Endothelial cell of umbilical vein (primary cell): ENCODE measurements at regions of chr6 and their contacts with region 1.

Region 1: DNA sequence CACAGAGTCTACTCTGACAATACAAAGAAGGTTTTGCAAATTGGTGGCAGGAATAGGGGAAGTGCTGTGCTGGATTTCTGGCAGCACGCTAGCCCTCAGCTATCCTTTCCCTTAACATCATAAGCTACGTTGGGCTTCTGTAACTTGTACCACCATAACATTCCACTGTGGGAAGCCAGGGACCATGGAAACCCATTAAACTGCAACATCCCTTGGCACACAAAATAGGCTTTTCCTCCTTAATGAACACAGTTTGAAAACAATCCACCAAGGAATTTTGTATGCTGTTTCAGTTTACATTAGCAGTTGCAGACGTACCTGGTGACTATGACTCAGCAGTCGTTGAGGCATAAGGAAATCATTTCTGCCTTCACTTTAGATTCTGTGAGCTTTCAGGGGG is 203.9 kb upstream of the RAB32 start:
- DNase-seq: peak; percentile 71
- H3K4me3 ChIP-seq: no peak overlapping the region
- H3K27ac ChIP-seq: no peak overlapping the region
- H3K4me1 ChIP-seq: peaks cover 28% of the 10 kb centered on the region
- H3K27me3 ChIP-seq: no peaks in the 10 kb centered on the region
- CTCF ChIP-seq: no peak
- POLR2A ChIP-seq: no peak

Region 2: DNA sequence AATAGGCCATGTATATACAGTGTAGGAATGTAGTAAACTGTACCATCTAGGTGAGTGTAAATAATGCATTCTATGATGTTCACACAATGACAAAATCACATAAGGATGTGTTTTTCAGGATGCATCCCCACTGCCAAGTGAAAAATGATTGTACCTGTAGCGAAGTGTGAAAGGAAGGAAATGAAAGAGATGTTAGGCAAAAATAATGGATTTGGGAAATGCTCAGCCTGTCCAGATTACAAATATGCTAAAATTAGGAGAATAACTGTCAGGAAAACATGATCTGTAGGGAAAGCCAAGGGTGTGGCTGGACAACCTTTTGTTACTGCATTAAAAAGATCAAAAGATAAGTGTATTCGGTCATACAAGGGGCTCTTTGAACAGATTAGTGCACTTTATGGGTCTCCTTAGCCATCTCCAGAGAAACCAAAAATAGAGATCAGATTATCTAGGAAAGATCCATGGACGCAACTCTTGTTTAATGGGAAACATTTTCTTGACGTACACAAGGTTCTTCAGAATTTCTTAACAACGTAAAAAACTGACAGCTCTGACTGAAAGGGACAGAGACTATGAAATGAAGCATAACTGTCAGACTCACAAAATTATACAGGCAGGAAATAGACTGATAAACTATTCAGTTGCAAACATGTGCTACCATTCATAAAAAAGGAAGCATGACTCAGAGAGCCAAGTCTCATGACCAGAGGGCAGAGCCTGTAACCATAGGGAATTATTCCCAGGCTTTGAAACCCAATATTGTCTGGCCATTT is 49.7 kb before region 1 on chr6:
- CTCF ChIA-PET with region 1: no interaction called
- POLR2A ChIA-PET with region 1: no interaction called
- dilution Hi-C with region 1: no loop called
- intact Hi-C with region 1: loop called (anchors 2 kb)
- DNase-seq: peak; percentile 79
- H3K4me3 ChIP-seq: no peak overlapping the region
- H3K27ac ChIP-seq: peak overlapping the region; percentile 64
- H3K4me1 ChIP-seq: peaks cover 15% of the 10 kb centered on the region
- H3K27me3 ChIP-seq: no peaks in the 10 kb centered on the region
- CTCF ChIP-seq: no peak
- POLR2A ChIP-seq: no peak